PC-9 (cell line): ENCODE measurements at regions of chr21 and their contacts with region 1.

Region 1: GRCh38 chr21:28745131-28746016 is 247.3 kb downstream of the LTN1 start:
- DNase-seq: peak; percentile 44 to 51
- H3K4me3 ChIP-seq: peak overlapping the region; percentile 37; the same call in 1 of the 2 replicates
- H3K27ac ChIP-seq: no peak overlapping the region
- H3K4me1 ChIP-seq: no peaks in the 10 kb centered on the region
- H3K27me3 ChIP-seq: no peaks in the 10 kb centered on the region
- CTCF ChIP-seq: peak; percentile 74

Region 2: DNA sequence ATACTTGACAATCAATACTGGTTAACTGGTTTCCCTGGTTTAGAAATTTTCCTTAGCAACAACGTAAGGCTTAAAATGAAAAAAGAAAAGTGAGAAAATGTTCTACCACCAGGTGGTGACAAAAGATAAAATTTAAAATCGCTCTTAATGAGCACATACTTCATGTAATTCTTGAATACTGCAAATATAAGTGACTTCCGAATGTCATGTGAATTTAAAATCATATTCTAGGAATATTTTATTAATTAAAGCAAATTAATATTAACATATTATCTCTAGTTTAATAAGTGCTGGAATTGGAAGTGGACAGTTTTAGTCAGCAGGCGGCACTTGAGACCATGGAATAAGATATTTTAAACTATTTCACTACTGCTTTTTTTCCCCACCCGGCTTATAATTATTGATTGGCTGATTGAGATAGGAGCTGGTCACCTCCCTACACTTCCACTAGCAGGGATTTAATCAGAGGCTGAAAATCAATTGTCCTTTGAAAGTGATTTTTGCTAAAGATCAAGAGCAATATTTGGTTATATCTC is 1895.2 kb before region 1 on chr21:
- CTCF ChIA-PET with region 1: interaction called, 3 read pairs
- POLR2A ChIA-PET with region 1: no interaction called
- intact Hi-C with region 1: loop called (anchors 1 kb)
- DNase-seq: no peak
- H3K4me3 ChIP-seq: no peak overlapping the region
- H3K27ac ChIP-seq: no peak overlapping the region
- H3K4me1 ChIP-seq: no peaks in the 10 kb centered on the region
- H3K27me3 ChIP-seq: peaks cover 7% of the 10 kb centered on the region
- CTCF ChIP-seq: peak; percentile 45

Region 3: GRCh38 chr21:27700974-27701614 is 1044.3 kb before region 1 on chr21:
- CTCF ChIA-PET with region 1: interaction called, 6 read pairs
- POLR2A ChIA-PET with region 1: no interaction called
- intact Hi-C with region 1: loop called (anchors 2 kb)
- DNase-seq: peak; percentile 50 to 52
- H3K4me3 ChIP-seq: no peak overlapping the region
- H3K27ac ChIP-seq: no peak overlapping the region
- H3K4me1 ChIP-seq: no peaks in the 10 kb centered on the region
- H3K27me3 ChIP-seq: no peaks in the 10 kb centered on the region
- CTCF ChIP-seq: peak; percentile 80

Region 4: DNA sequence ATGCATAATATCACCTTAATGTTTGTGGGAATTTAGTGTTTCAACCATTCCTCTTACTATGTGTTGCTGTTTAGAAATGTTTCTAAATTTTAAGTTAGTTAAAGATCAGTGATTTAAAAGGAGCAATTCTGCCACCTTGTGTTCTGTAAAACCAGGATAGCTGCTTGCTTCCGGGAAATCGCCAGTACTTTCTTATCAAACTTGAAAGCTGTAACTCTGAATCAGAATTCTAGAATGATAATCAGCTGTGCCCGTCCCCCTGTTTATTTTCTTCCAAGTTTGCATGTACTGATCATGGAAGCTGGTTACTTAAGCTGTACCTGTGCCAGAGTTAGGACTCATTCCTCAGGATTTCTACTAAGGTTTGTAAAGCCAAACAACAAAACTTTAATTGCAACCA is 409.1 kb before region 1 on chr21:
- CTCF ChIA-PET with region 1: interaction called, 5 read pairs
- POLR2A ChIA-PET with region 1: no interaction called
- intact Hi-C with region 1: loop called (anchors 1 kb)
- DNase-seq: peak in 1 of 2 experiments; percentile 4
- H3K4me3 ChIP-seq: no peak overlapping the region
- H3K27ac ChIP-seq: no peak overlapping the region
- H3K4me1 ChIP-seq: no peaks in the 10 kb centered on the region
- H3K27me3 ChIP-seq: no peaks in the 10 kb centered on the region
- CTCF ChIP-seq: peak; percentile 43; the same call in 1 of the 2 replicates

Region 5: DNA sequence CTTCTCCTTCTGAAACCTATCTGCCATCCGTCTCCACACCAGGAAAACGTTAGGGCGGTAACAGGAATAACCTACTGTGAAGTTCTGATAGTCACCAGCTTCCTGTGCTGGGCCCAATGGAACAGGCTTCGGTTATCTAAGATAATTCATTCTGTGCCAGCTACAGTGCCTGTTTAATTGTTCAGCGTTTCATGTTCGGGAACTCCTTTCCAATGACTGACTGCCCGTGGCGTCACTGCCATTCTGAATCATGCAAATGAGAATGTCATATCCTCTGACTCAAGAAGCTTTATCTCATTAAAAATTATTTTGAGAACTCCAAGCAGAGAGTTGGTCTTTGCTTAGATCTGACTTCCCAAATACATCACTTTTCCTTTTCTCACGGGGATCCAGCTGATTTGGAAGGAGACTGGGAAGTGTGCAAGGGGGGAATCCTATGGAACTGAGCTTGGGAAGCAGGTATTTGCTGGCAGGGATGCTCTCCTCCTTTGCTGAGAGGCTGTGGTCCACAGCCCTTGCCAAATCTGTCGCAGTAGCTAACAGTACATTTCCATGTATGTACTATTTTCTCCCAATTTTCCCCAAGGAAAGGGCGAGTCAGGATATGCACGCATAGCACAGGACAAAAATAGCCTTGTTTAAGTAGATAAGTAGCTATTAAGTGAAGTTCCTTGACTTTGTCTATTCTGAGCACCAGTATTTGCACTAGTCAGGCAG is 111.4 kb before region 1 on chr21:
- CTCF ChIA-PET with region 1: no interaction called
- POLR2A ChIA-PET with region 1: no interaction called
- intact Hi-C with region 1: loop called (anchors 10 kb)
- DNase-seq: no peak
- H3K4me3 ChIP-seq: no peak overlapping the region
- H3K27ac ChIP-seq: no peak overlapping the region
- H3K4me1 ChIP-seq: peaks cover 21% of the 10 kb centered on the region
- H3K27me3 ChIP-seq: no peaks in the 10 kb centered on the region
- CTCF ChIP-seq: no peak

Region 6: GRCh38 chr21:28669321-28669720 is 76.1 kb before region 1 on chr21:
- CTCF ChIA-PET with region 1: no interaction called
- POLR2A ChIA-PET with region 1: no interaction called
- intact Hi-C with region 1: no loop called
- DNase-seq: no peak
- H3K4me3 ChIP-seq: no peak overlapping the region
- H3K27ac ChIP-seq: no peak overlapping the region
- H3K4me1 ChIP-seq: no peaks in the 10 kb centered on the region
- H3K27me3 ChIP-seq: no peaks in the 10 kb centered on the region
- CTCF ChIP-seq: no peak